Ascending aorta (tissue), 2 donors: ENCODE measurements at regions of chr14 and their contacts with region 1.

Region 1: DNA sequence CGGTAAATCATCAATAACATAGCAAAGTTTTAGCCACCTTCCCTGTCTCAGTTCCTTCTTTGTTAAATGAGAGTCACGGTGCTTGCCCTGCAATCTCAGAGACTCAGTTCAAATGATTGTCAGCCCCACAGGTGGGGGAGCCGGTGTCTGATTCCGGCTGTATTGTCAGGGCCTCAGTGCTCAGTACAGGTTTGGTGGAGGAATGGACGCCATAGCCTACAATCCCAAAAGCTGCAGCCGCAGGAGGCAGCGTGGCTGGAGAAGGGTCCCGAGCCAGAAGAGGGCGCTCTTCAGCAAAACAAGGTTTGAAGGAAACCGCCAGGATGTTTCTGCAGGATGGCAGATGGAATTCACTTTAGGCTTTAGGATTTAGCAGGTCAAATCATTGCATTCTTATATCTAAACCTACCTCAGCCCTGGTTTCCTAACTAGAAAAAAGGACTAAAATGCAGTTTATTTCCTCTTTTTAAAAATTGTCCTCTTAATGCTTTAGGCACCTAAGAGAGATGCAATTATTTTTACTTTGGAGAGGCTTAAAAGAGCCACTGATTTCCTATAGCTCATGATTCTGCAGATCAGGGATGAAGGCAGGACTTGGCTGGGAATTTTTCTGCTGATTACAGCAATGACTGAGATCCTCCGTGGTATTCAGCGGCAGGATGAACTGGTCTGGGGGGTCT is 29.2 kb downstream of the FOS start:
- DNase-seq: peak in 1 of 2 donors; percentile 91
- H3K4me3 ChIP-seq: no peak overlapping the region
- H3K27ac ChIP-seq: no peak overlapping the region
- H3K4me1 ChIP-seq: peaks cover 0 to 13% of the 10 kb centered on the region in 2 donors
- H3K27me3 ChIP-seq: no peaks in the 10 kb centered on the region
- CTCF ChIP-seq: peak; percentile 74 to 94 (median 86)

Region 2: DNA sequence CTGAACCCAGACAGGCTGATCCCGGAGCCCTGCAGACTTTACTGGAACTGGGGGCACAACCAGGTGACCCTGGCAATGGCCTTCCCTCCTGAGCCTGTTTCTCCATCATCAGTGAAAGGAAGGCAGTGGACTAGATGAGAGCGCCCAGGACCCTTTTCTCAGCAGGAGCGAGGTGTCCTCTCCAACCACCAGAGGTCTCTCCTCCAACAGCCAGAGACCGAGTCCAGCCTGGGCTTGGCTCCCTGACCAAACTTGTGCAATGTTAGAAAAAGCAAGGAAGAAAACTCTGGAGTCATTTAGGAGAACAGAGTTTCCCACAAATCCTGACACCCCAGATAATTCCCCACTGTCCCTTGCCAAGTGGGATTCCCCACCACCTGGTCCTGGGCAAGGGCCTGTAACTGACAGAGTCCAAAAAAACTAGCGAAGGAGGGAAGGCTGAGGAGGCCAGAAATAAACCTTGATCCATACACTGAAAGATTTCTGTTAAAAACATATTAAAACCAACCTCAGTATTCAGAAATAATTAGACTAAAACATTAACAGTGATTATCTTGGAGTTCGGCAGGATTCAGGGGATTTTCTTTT is 393.8 kb before region 1 on chr14:
- intact Hi-C with region 1: loop called (anchors 10 kb)
- DNase-seq: peak in 1 of 2 donors; percentile 87
- H3K4me3 ChIP-seq: no peak overlapping the region
- H3K27ac ChIP-seq: peak overlapping the region; percentile 12 to 27
- H3K4me1 ChIP-seq: peaks cover 2 to 13% of the 10 kb centered on the region in 2 donors
- H3K27me3 ChIP-seq: no peaks in the 10 kb centered on the region
- CTCF ChIP-seq: peak; percentile 71 to 77 (median 74)

Region 3: GRCh38 chr14:75361751-75362433 is 54.1 kb after region 1 on chr14:
- intact Hi-C with region 1: loop called (anchors 2 kb)
- DNase-seq: peak in 1 of 2 donors; percentile 73
- H3K4me3 ChIP-seq: peak overlapping the region in 1 of 2 donors; percentile 35
- H3K27ac ChIP-seq: peak overlapping the region; percentile 68 to 74
- H3K4me1 ChIP-seq: peaks cover 3 to 24% of the 10 kb centered on the region in 2 donors
- H3K27me3 ChIP-seq: no peaks in the 10 kb centered on the region
- CTCF ChIP-seq: no peak

Region 4: GRCh38 chr14:75427482-75428229 is 119.8 kb after region 1 on chr14 and contains the start of gene JDP2:
- intact Hi-C with region 1: loop called (anchors 2 kb)
- DNase-seq: peak; percentile 64 to 95
- H3K4me3 ChIP-seq: peak within 1 kb of the TSS; percentile 87 to 90
- H3K27ac ChIP-seq: peak within 1 kb of the TSS; percentile 78 to 84
- H3K4me1 ChIP-seq: peaks cover 17 to 30% of the 10 kb centered on the region in 2 donors
- H3K27me3 ChIP-seq: no peaks in the 10 kb centered on the region
- CTCF ChIP-seq: peak in 2 of 3 experiments; percentile 29 to 30
- total RNA-seq, gene JDP2: 213 TPM

Region 5: DNA sequence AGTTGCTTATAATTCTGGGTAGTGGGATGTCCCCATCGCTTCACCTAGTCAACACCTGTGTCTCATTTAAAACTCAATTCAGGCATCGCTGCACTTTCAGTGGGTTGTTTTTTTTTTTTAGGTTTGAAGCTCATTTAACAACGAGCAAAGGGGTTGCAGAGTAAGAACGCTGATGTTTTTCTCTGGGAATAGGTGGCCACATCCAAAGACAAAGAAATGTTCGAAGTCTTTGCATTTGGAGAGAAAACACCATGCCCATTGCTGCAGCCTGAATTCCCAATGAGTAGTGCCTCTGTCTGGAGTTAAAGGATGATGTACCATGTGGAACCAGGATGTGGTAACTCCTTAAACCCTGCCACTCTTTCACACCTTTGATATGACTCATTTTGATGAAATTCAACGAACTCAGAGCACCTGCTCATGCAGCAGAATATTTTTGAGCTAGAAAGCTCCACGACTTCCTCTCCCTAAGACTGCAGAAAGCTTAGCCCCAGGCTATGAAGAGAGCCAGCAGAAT is 179.4 kb after region 1 on chr14:
- intact Hi-C with region 1: loop called (anchors 1 kb)
- DNase-seq: no peak
- H3K4me3 ChIP-seq: no peak overlapping the region
- H3K27ac ChIP-seq: no peak overlapping the region
- H3K4me1 ChIP-seq: no peaks in the 10 kb centered on the region
- H3K27me3 ChIP-seq: no peaks in the 10 kb centered on the region
- CTCF ChIP-seq: no peak